Head of caudate nucleus (tissue), 42 donors: ENCODE measurements at regions of chr9 and their contacts with region 1.

Region 1: GRCh38 chr9:25964239-25964638 is 286.0 kb upstream of the TUSC1 start:
- DNase-seq: peak in 26 of 42 donors; percentile 6 to 70 (median 40)

Region 2: DNA sequence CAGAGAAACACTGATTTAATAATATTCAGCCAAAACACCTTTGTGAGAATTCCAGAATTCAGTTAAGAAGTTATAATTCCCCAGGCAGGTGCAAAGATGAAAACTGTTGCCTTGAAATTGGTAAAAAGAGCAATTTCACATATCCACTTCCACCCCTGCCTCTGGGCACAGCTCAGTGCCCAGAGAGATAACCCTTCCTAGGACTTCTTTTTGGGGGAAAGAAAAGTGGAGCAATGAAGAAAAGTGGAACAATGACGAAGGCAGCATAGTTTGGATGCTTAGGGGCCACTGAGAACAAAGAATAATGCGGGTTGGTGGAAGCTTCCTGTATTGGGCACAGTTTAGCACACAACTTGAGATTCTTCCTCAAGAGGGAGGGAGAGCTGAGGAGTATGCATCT is 43.9 kb before region 1 on chr9:
- intact Hi-C with region 1: no loop called
- DNase-seq: no peak

Region 3: DNA sequence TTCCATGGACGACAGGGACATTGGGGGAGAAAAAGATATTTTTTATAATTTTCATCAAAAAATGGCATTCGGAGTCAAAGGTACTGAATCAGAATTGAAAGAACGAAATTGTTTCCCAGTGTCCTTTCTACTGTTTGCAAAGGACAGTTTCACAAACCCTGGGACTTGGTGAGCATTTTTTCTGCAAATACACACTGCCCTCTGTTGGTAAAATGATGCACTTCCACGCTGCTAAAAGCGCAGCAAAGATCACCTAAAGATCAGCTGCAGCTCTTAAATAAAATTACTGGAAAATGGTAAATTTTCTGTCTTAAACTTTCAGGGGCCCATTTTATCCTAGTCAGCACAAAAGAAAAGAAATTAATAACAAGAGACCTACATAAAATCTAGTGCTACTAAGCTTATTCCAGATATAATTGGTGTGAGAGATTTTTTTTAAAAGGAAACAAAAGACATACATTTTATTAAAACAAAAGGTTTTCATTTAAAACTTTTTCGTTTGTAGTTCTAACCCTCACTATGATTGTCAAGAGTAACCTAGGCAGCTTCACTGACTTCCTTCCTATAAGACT is 362.3 kb after region 1 on chr9:
- intact Hi-C with region 1: loop called (anchors 5 kb)
- DNase-seq: peak in 34 of 42 donors; percentile 17 to 79 (median 54)